GM12878 (cell line): ENCODE measurements at regions of chr9 and their contacts with region 1.

Region 1: DNA sequence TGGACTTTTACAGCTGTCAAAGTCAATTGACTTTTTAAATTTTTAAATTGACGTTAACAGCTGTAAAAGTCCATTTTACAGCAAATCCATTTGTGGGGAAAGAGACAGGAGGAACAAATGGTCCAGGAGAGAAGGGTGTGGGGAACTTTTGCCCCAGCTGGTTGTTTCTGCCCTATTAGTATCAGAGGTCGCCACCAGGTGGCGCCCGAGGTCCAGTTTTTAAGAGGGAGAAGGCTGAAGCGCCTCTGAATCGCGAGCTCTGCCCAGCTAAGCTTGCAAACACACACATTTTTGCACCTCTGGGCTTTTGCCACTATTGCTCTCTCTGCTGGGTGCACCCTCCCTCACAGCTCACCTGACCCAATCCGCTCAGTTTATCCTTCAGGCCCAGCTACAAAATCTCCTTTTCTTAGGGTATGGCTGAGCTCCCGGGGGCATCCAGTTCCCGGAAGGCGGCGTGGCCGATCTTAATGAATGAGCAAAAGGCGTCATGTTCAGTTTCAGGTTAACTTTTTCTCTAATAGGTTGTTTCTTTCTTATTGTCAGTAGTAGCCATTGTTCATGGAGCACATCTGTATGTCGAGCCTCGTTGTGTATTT is 6.3 kb upstream of the TTLL11 start:
- DNase-seq: no peak
- ATAC-seq: peak; percentile 94
- H3K4me3 ChIP-seq: no peak overlapping the region
- H3K27ac ChIP-seq: no peak overlapping the region
- H3K4me1 ChIP-seq: no peaks in the 10 kb centered on the region
- H3K27me3 ChIP-seq: no peaks in the 10 kb centered on the region; a peak in 1 of 4 replicates
- CTCF ChIP-seq: peak; percentile 72 to 87 (median 75)
- EP300 ChIP-seq: no peak
- POLR2A ChIP-seq: no peak
- RAD21 ChIP-seq: peak; percentile 75

Region 2: DNA sequence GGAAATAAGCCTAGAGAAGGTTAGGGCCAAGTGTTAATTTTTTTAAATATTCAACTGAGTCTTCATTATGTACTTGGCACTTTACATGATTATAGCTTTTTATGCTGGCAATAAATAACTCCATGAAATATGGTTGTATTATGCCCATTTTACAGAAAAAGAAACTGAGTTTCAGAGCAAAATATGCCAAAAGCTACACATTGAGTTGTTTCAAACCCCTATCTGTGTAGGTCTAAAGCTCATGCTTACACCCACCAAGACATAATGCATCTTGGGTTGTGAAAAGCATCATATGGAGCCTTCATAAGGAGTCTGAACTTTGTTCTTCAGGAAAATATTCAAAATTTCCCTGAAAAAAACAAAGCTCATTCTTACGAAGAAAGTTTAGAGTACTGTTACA is 20.8 kb before region 1 on chr9:
- CTCF ChIA-PET with region 1: interaction called, 13 read pairs
- POLR2A ChIA-PET with region 1: no interaction called
- RAD21 ChIA-PET with region 1: interaction called, 3 read pairs
- SMC1A ChIA-PET with region 1: no interaction called
- in situ Hi-C with region 1: no loop called
- intact Hi-C with region 1: no loop called
- DNase-seq: no peak
- ATAC-seq: no peak
- H3K4me3 ChIP-seq: no peak overlapping the region
- H3K27ac ChIP-seq: no peak overlapping the region
- H3K4me1 ChIP-seq: no peaks in the 10 kb centered on the region
- H3K27me3 ChIP-seq: no peaks in the 10 kb centered on the region
- CTCF ChIP-seq: no peak
- EP300 ChIP-seq: no peak
- POLR2A ChIP-seq: no peak
- RAD21 ChIP-seq: no peak

Region 3: GRCh38 chr9:122116040-122116439 is 16.7 kb after region 1 on chr9:
- CTCF ChIA-PET with region 1: interaction called, 163 read pairs
- POLR2A ChIA-PET with region 1: no interaction called
- RAD21 ChIA-PET with region 1: interaction called, 76 read pairs
- SMC1A ChIA-PET with region 1: interaction called, 12 read pairs
- in situ Hi-C with region 1: no loop called
- intact Hi-C with region 1: no loop called
- DNase-seq: no peak
- ATAC-seq: no peak
- H3K4me3 ChIP-seq: no peak overlapping the region
- H3K27ac ChIP-seq: no peak overlapping the region
- H3K4me1 ChIP-seq: no peaks in the 10 kb centered on the region
- H3K27me3 ChIP-seq: no peaks in the 10 kb centered on the region
- CTCF ChIP-seq: no peak
- EP300 ChIP-seq: no peak
- POLR2A ChIP-seq: no peak
- RAD21 ChIP-seq: no peak

Region 4: GRCh38 chr9:122151267-122151828 is 52.0 kb after region 1 on chr9:
- CTCF ChIA-PET with region 1: interaction called, 17 read pairs
- POLR2A ChIA-PET with region 1: no interaction called
- RAD21 ChIA-PET with region 1: no interaction called
- SMC1A ChIA-PET with region 1: no interaction called
- in situ Hi-C with region 1: no loop called
- intact Hi-C with region 1: no loop called
- DNase-seq: no peak
- ATAC-seq: no peak
- H3K4me3 ChIP-seq: no peak overlapping the region
- H3K27ac ChIP-seq: no peak overlapping the region
- H3K4me1 ChIP-seq: no peaks in the 10 kb centered on the region
- H3K27me3 ChIP-seq: no peaks in the 10 kb centered on the region
- CTCF ChIP-seq: peak in 1 of 3 experiments; percentile 12; a peak in 1 of 6 replicates
- EP300 ChIP-seq: no peak
- POLR2A ChIP-seq: no peak
- RAD21 ChIP-seq: no peak

Region 5: DNA sequence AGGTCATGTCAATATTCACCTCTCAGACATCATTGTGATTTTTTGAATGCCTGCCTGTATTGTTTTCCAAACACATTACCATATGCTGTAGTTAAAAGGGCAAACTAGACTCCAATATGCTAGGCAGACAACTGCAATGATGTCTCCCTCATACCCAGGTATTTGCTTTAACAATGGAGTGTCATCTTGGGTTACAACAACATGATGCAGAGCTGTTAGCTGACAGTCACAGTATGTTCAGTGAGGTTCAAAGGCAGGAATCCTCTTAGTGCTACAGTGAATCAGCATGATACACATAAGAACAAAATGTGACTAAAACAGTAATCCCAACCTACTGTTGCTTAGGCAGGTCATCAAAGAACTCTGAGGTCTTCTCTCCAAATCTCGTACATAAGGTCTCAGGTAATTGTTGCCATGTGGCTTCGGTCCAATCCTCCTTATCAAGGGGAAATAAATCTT is 354.3 kb after region 1 on chr9:
- CTCF ChIA-PET with region 1: interaction called, 23 read pairs
- POLR2A ChIA-PET with region 1: no interaction called
- RAD21 ChIA-PET with region 1: interaction called, 4 read pairs
- SMC1A ChIA-PET with region 1: no interaction called
- in situ Hi-C with region 1: no loop called
- intact Hi-C with region 1: loop called (anchors 2 kb)
- DNase-seq: no peak
- ATAC-seq: no peak
- H3K4me3 ChIP-seq: no peak overlapping the region
- H3K27ac ChIP-seq: no peak overlapping the region
- H3K4me1 ChIP-seq: no peaks in the 10 kb centered on the region
- H3K27me3 ChIP-seq: no peaks in the 10 kb centered on the region
- CTCF ChIP-seq: no peak
- EP300 ChIP-seq: no peak
- POLR2A ChIP-seq: no peak
- RAD21 ChIP-seq: no peak

Region 6: DNA sequence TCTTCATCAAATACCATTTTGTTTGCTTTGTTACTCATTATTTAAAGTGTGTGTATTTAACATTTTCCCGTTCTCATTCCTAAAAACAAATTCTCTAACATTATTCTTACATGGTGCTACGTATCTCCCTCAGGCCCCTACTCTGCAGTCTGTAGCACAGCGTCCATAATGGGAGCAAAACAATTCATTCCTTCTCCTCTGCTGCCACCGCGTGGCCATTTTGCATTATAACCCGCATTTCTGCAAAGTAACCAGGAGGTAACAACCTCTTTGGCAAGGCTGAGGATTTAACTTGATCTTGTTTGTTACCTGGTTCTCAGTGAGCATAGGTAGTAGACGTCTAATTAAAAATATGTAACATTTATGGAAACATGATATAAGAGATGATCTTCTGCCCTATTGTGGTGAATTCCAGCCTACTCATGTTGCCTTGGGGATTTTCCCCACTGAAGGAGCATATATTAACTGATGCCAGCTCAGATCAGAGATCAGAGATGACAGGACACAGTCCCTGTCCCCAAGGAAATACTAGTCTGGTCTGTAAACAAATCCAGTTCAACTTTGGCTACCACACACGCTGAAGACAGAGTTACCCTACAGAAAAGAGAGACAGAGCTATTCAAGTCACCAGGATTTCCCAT is 711.1 kb after region 1 on chr9:
- CTCF ChIA-PET with region 1: interaction called, 14 read pairs
- POLR2A ChIA-PET with region 1: no interaction called
- RAD21 ChIA-PET with region 1: no interaction called
- SMC1A ChIA-PET with region 1: interaction called, 14 read pairs
- in situ Hi-C with region 1: loop called (anchors 10 kb)
- intact Hi-C with region 1: loop called (anchors 2 kb)
- DNase-seq: peak; percentile 43
- ATAC-seq: peak; percentile 96
- H3K4me3 ChIP-seq: no peak overlapping the region
- H3K27ac ChIP-seq: no peak overlapping the region
- H3K4me1 ChIP-seq: no peaks in the 10 kb centered on the region
- H3K27me3 ChIP-seq: no peaks in the 10 kb centered on the region
- CTCF ChIP-seq: peak; percentile 55 to 90 (median 83); a peak in 4 of 6 replicates
- EP300 ChIP-seq: no peak
- POLR2A ChIP-seq: no peak
- RAD21 ChIP-seq: peak; percentile 96